HEK293 (cell line): ENCODE measurements at regions of chr12 and their contacts with region 1.

Region 1: GRCh38 chr12:5428332-5429221 is 3.3 kb upstream of the NTF3 start:
- H3K4me3 ChIP-seq: no peak overlapping the region
- H3K27ac ChIP-seq: no peak overlapping the region; the same call in 1 of the 2 replicates
- H3K4me1 ChIP-seq: peaks cover 24% of the 10 kb centered on the region
- CTCF ChIP-seq: peak; percentile 57

Region 2: GRCh38 chr12:5200278-5201087 is 228.1 kb before region 1 on chr12:
- CTCF ChIA-PET with region 1: interaction called, 43 read pairs
- POLR2A ChIA-PET with region 1: no interaction called
- H3K4me3 ChIP-seq: no peak overlapping the region
- H3K27ac ChIP-seq: no peak overlapping the region
- H3K4me1 ChIP-seq: no peaks in the 10 kb centered on the region
- CTCF ChIP-seq: peak; percentile 72

Region 3: GRCh38 chr12:5417500-5417899 is 11.1 kb before region 1 on chr12:
- CTCF ChIA-PET with region 1: interaction called, 16 read pairs
- POLR2A ChIA-PET with region 1: interaction called, 6 read pairs
- H3K4me3 ChIP-seq: no peak overlapping the region
- H3K27ac ChIP-seq: no peak overlapping the region
- H3K4me1 ChIP-seq: no peaks in the 10 kb centered on the region
- CTCF ChIP-seq: no peak

Region 4: GRCh38 chr12:5648692-5649359 is 220.2 kb after region 1 on chr12:
- CTCF ChIA-PET with region 1: interaction called, 34 read pairs
- POLR2A ChIA-PET with region 1: no interaction called
- H3K4me3 ChIP-seq: no peak overlapping the region
- H3K27ac ChIP-seq: no peak overlapping the region
- H3K4me1 ChIP-seq: no peaks in the 10 kb centered on the region
- CTCF ChIP-seq: peak; percentile 17; the same call in 1 of the 2 replicates

Region 5: GRCh38 chr12:6039894-6040568 is 611.5 kb after region 1 on chr12:
- CTCF ChIA-PET with region 1: interaction called, 12 read pairs
- POLR2A ChIA-PET with region 1: no interaction called
- H3K4me3 ChIP-seq: no peak overlapping the region
- H3K27ac ChIP-seq: no peak overlapping the region
- H3K4me1 ChIP-seq: no peaks in the 10 kb centered on the region
- CTCF ChIP-seq: peak; percentile 81